ENCODE measurements at regions of chr11 and their contacts with region 1.

Region 1: GRCh38 chr11:47980245-47981049 is at the start of gene PTPRJ:
- DNase-seq: peak; percentile 48
- ATAC-seq: peak; percentile 69
- H3K4me3 ChIP-seq: peak within 1 kb of the TSS; percentile 96
- H3K27ac ChIP-seq: peak within 1 kb of the TSS; percentile 77
- H3K4me1 ChIP-seq: peaks cover 19% of the 10 kb centered on the region
- H3K27me3 ChIP-seq: no peaks in the 10 kb centered on the region
- CTCF ChIP-seq: 0 out of 2 replicates have a peak, but pooled peaks have one; percentile 4
- POLR2A ChIP-seq: peak; percentile 18; the same call in 1 of the 2 replicates
- RAD21 ChIP-seq: no peak
- total RNA-seq, gene PTPRJ: 13.6 and 14.9 TPM in 2 replicates

Region 2: GRCh38 chr11:47938791-47939560 is 41.5 kb before region 1 on chr11:
- CTCF ChIA-PET with region 1: interaction called, 5 read pairs
- POLR2A ChIA-PET with region 1: no interaction called
- dilution Hi-C with region 1: no loop called
- in situ Hi-C with region 1: no loop called
- intact Hi-C with region 1: loop called (anchors 2 kb)
- DNase-seq: no peak
- ATAC-seq: peak; percentile 30
- H3K4me3 ChIP-seq: no peak overlapping the region
- H3K27ac ChIP-seq: no peak overlapping the region
- H3K4me1 ChIP-seq: peaks cover 10% of the 10 kb centered on the region
- H3K27me3 ChIP-seq: no peaks in the 10 kb centered on the region
- CTCF ChIP-seq: no peak
- POLR2A ChIP-seq: no peak
- RAD21 ChIP-seq: no peak

Measured in IMR-90 (cell line).